ENCODE measurements at regions of chr13 and their contacts with region 1.

Region 1: DNA sequence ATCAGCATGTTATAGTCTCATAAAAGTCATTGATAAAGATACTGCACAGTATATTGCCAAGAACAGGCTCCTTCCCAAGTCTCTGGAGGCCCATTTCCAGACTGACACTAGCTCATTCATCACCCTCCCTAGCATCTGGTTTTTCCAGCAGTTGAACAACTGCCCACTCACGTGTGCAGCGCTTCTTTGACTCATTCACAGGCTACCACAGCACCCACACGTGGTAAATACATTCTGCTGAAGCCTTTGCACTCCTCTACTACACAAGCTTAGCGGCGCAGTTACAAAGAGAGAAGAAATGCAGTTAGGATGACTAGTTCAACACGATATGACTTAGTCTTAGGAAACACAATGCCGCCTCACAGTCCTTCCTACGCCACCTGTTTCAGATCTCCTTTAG is 87.7 kb downstream of the DOCK9 start:
- DNase-seq: peak; percentile 76
- H3K4me3 Mint-ChIP-seq: no peak overlapping the region
- H3K27ac Mint-ChIP-seq: peak overlapping the region; percentile 65
- H3K4me1 Mint-ChIP-seq: peaks cover 21% of the 10 kb centered on the region
- H3K27me3 Mint-ChIP-seq: no peaks in the 10 kb centered on the region

Region 2: DNA sequence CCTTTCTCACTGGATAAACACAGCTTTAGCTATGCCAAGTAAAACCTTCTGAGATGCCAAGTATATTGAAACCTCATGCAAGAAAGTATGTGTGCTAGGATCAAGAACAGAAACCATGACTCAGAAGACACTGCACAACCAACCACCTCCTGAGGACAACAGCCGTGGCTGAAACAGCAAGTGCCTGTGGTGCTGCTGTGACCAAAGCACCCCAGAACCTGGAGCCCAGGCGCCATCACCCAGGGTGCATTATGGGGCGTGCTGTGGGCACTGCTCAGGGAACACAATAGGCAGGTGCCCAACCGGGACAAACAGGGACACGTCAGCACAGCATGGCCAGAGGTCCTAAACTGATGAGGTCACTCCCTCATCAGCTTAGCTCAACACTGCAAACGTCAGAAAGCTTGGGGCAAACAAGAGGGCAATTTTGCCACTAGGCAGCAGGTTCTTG is 36.4 kb before region 1 on chr13:
- CTCF ChIA-PET with region 1: no interaction called
- POLR2A ChIA-PET with region 1: no interaction called
- intact Hi-C with region 1: loop called (anchors 1 kb)
- DNase-seq: peak; percentile 87
- H3K4me3 Mint-ChIP-seq: no peak overlapping the region
- H3K27ac Mint-ChIP-seq: peak overlapping the region; percentile 46
- H3K4me1 Mint-ChIP-seq: peaks cover 12% of the 10 kb centered on the region
- H3K27me3 Mint-ChIP-seq: no peaks in the 10 kb centered on the region

Region 3: DNA sequence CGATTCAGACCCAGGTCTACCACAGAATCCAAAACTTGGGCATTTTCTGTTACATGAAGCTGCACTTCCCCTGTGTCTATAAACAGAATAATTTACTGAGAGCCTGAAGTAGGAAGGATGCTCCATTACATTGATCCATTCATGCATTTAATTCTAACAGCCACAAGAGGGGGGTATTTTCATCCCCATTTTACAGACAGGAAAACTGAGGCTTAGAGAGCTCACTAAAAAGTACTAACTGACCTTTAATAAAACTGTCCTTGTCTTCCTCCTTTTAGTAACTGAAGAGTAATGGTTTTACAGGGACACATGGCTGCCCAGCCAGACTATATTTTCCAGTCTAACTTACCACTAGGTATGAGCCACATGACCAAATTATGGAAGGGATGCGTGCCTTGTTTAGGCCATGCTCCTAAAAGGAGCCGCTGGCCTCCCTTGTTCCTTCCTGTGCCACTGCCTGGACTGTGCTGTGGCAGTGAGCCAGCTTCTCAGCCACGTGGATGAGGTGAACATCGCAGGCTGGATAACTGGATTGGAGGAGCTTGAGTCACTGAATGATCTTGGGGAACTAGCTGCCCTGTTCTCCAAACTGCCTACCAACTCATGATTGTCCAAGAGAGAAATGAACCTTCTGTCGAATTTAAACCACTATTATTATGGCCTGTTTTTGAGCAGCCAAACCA is 20.6 kb before region 1 on chr13:
- CTCF ChIA-PET with region 1: interaction called, 12 read pairs
- POLR2A ChIA-PET with region 1: interaction called, 3 read pairs
- intact Hi-C with region 1: no loop called
- DNase-seq: no peak
- H3K4me3 Mint-ChIP-seq: no peak overlapping the region
- H3K27ac Mint-ChIP-seq: no peak overlapping the region
- H3K4me1 Mint-ChIP-seq: peaks cover 11% of the 10 kb centered on the region
- H3K27me3 Mint-ChIP-seq: no peaks in the 10 kb centered on the region

Region 4: DNA sequence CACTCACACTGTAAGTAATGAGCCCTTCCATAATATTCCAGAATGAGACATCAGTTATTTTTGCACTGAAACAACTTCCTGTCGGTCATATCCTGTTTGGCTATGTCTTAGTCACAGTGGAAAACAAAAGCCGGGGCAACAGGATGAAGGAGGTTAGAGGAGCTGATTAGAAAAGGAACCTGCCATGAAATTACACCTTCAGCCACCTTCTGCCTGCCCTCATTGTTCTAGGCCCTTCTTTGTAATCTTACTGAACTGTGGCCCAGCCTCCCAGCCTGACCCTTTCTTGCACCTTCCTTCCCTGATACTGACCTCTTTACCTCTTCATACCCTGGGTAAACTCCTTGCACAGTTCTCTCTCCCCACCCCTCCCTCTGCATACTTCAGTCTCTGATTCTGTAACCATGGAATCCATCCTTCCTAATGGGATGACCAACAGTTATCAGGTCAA is 20.3 kb after region 1 on chr13:
- CTCF ChIA-PET with region 1: interaction called, 4 read pairs
- POLR2A ChIA-PET with region 1: interaction called, 5 read pairs
- intact Hi-C with region 1: loop called (anchors 1 kb)
- DNase-seq: peak; percentile 64
- H3K4me3 Mint-ChIP-seq: no peak overlapping the region
- H3K27ac Mint-ChIP-seq: peak overlapping the region; percentile 94
- H3K4me1 Mint-ChIP-seq: peaks cover 60% of the 10 kb centered on the region
- H3K27me3 Mint-ChIP-seq: no peaks in the 10 kb centered on the region

Region 5: DNA sequence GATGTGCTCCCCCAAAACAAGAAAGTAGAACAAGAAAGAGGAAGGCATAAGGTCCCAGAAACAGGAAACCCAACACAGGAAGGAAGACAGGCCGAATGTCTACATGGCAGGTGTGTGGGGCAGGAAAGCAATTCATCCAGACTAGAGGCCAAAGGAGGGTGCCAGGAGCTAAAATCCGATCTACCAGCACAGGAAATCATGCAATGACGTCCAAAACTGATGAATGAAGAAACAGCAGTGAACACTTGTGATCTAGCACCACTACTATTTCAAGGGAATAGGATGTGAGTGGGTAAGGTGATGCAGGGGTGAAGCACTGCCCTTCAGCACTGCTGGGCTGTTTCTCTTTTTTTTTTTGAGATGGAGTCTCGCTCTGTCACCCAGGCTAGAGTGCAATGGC is 28.6 kb after region 1 on chr13:
- CTCF ChIA-PET with region 1: no interaction called
- POLR2A ChIA-PET with region 1: interaction called, 3 read pairs
- intact Hi-C with region 1: loop called (anchors 1 kb)
- DNase-seq: peak; percentile 32
- H3K4me3 Mint-ChIP-seq: no peak overlapping the region
- H3K27ac Mint-ChIP-seq: peak overlapping the region; percentile 71
- H3K4me1 Mint-ChIP-seq: peaks cover 36% of the 10 kb centered on the region
- H3K27me3 Mint-ChIP-seq: no peaks in the 10 kb centered on the region

Region 6: DNA sequence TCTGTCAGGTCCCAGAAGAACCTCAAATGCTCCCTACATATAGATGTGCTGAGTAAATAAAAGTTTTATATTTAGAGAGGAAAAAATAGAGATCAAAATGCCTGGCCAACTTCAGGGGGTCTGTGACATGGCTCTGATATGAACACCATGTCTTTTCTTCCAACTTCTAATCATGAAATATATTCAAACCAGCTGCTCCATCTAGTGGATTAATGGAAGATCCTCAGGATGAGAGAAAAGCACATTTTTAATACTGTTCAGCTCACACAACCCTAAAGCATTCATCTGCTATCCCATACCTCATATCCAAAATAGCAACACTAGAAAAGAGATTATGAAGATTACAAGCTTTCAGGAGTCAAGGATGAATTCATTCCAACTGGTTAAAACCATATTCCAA is 143.6 kb after region 1 on chr13:
- CTCF ChIA-PET with region 1: interaction called, 13 read pairs
- POLR2A ChIA-PET with region 1: interaction called, 6 read pairs
- intact Hi-C with region 1: no loop called
- DNase-seq: no peak
- H3K4me3 Mint-ChIP-seq: no peak overlapping the region
- H3K27ac Mint-ChIP-seq: no peak overlapping the region
- H3K4me1 Mint-ChIP-seq: peaks cover 57% of the 10 kb centered on the region
- H3K27me3 Mint-ChIP-seq: no peaks in the 10 kb centered on the region